Esophagus squamous epithelium (tissue), 5 donors: ENCODE measurements at regions of chr4 and their contacts with region 1.

Region 1: DNA sequence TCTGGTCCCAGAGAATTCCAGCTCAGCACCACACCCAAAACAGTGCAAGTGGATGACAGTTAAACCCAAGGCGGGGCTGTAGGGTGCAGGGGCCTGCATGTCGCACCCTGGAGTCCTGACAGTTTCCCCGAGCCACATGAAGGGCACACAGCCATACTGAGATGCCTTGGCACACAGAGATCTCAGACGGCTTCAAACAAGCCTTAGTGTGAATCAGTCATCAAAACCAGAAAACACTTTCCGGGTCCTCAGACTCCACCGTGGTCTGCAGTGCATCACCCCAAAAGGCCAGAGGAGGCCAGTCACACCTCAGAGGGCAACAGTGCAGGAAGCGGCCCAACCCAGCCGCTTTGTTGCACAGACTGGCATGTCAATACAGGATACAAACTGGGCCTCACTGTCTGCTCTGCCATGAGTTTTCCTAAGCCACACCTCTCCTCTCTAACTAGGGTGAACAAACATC is 64.6 kb upstream of the ENPP6 start:
- DNase-seq: no peak
- H3K4me3 ChIP-seq: no peak overlapping the region
- H3K27ac ChIP-seq: peak overlapping the region; percentile 53 to 80 (median 64)
- H3K4me1 ChIP-seq: peaks cover 22 to 42% (median 27%) of the 10 kb centered on the region in 3 donors
- H3K27me3 ChIP-seq: no peaks in the 10 kb centered on the region
- CTCF ChIP-seq: peak in 4 of 6 experiments; percentile 14 to 54 (median 37)
- POLR2A ChIP-seq: no peak

Region 2: DNA sequence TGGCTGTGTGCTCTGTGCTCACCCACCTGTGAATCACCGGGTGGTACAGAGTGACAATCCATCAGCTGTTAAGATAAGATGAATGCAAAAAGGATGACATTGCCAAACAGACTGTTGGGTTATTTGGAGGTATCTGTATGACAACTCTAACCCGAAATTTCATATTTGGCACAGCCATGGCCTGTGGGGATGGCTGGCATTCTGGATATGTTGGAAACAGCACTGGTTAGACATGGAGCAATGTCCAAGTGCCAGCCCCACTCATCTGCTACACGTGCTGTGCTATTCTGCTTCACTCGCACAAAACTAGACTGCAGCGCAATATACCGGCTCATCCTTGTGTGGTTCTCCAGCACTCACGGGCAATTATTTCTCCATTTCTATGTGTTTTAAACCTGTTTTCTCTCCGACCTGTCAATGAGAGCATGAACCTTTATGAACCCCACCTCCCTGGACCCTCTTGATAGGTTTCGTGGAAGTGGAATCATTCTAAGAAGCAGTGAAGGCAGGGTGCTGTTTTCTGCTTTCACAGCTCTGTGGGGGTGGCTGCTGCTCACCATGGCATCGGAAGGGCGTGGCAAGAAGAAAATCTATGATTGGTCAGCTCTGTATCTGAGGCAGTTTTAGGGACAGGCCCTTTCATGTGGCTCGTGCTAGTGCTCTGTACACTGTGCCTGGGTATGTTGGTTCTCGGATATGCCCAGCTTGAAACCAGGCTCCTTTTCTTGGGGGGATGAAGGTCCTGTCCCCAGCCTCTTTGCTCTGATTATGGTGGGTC is 159.5 kb before region 1 on chr4:
- intact Hi-C with region 1: no loop called
- DNase-seq: no peak
- H3K4me3 ChIP-seq: no peak overlapping the region
- H3K27ac ChIP-seq: no peak overlapping the region
- H3K4me1 ChIP-seq: no peaks in the 10 kb centered on the region
- H3K27me3 ChIP-seq: no peaks in the 10 kb centered on the region
- CTCF ChIP-seq: no peak
- POLR2A ChIP-seq: no peak

Region 3: GRCh38 chr4:184474263-184475095 is 192.2 kb after region 1 on chr4 and contains the start of gene IRF2:
- intact Hi-C with region 1: loop called (anchors 10 kb)
- DNase-seq: peak; percentile 83
- H3K4me3 ChIP-seq: peak within 1 kb of the TSS; percentile 74 to 89 (median 81)
- H3K27ac ChIP-seq: peak within 1 kb of the TSS; percentile 97 to 99 (median 97)
- H3K4me1 ChIP-seq: peaks cover 3 to 64% (median 24%) of the 10 kb centered on the region in 3 donors
- H3K27me3 ChIP-seq: no peaks in the 10 kb centered on the region
- CTCF ChIP-seq: peak in 3 of 6 experiments; percentile 28 to 44 (median 44)
- POLR2A ChIP-seq: peak in 3 of 4 donors; percentile 84 to 97 (median 96)
- total RNA-seq, gene IRF2: 16.6 to 30.2 (median 23.4) TPM